ENCODE measurements at regions of chr4 and their contacts with region 1.

Region 1: GRCh38 chr4:139153420-139154133 is 23.4 kb downstream of the ELF2 start:
- DNase-seq: no peak
- ATAC-seq: no peak

Region 2: DNA sequence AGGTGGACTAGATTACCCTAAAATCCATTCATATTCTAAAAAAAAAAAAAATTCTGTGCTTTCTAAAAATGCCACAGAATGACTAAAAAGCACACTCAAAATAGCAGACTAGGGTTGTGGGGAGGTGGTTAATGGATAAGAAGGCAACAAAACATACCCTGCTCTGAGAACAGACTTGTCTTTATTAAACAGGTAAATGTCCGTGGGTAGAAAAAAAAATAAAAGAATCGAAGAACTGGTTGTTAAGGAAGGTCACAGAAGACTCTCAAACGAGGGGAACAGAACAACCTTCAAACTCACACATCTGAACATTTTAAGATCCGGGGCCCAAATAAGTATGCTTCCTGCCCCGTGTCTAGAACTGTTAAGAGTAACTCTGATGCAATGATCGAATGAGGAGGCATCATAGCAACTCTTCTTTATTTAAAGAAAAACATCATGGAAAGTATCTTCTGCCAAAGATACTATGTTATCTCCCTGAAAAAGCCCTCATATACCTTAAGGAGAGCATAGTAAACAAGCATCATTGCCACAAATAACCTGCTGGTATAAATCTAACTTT is 44.9 kb before region 1 on chr4:
- intact Hi-C with region 1: loop called (anchors 10 kb)
- DNase-seq: no peak
- ATAC-seq: no peak

Measured in Right ventricle myocardium superior (tissue), 1 donor.